Posterior vena cava (tissue), 2 donors: ENCODE measurements at regions of chr2 and their contacts with region 1.

Region 1: GRCh38 chr2:114331934-114332333 is 110.5 kb upstream of the DPP10 start:
- DNase-seq: no peak

Region 2: DNA sequence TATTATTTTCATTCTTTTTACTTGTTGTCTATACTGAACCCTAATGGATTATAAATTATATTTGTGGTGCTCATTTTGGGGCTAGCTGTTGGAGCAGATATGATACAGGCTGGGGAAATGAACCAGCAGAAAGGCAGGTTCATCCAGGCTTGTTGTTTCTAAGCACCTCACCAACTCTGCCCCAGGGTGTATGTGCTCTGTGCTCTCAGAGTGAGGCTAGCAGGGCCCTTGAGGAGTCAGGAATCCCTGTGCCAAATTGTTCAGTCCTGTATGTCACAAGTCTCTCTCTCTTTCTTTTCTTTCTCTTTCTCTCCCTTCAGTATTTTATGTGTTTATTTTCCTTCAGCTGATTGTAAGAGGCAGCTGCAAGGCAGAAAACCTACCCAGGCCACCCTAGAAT is 70.6 kb before region 1 on chr2:
- intact Hi-C with region 1: no loop called
- DNase-seq: no peak

Region 3: GRCh38 chr2:114400890-114401289 is 69.0 kb after region 1 on chr2:
- intact Hi-C with region 1: no loop called
- DNase-seq: no peak

Region 4: DNA sequence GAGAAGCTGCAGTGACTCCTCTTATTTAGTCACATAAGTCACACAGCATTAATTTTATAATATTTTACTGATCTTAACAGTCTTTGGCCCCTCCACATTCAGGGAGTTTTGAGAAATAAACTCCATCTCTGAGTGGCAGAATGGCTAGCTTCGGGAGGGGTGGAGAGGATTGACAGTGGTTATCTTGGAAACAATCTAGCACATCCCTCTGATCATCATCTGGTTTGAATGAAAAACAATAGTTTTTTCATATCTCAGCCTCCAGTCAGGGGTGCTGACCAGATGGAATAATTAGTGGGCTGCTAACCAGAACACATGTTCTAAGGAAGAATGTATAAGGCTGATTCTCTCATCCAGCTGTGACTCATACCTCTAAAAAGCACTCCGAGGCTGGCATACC is 588.1 kb after region 1 on chr2:
- intact Hi-C with region 1: loop called in 1 of 2 experiments (anchors 5 kb)
- DNase-seq: no peak